Activated B cell treated with CpG ODN at 0.5 μM for 24 hours (primary cell): ENCODE measurements at regions of chr2 and their contacts with region 1.

Region 1: GRCh38 chr2:117994729-117995128 is 19.1 kb downstream of the CCDC93 start:
- DNase-seq: no peak
- ATAC-seq: no peak
- H3K4me3 Mint-ChIP-seq: no peak overlapping the region
- H3K27ac Mint-ChIP-seq: no peak overlapping the region
- H3K4me1 Mint-ChIP-seq: no peaks in the 10 kb centered on the region
- H3K27me3 Mint-ChIP-seq: no peaks in the 10 kb centered on the region
- CTCF ChIP-seq: no peak

Region 2: DNA sequence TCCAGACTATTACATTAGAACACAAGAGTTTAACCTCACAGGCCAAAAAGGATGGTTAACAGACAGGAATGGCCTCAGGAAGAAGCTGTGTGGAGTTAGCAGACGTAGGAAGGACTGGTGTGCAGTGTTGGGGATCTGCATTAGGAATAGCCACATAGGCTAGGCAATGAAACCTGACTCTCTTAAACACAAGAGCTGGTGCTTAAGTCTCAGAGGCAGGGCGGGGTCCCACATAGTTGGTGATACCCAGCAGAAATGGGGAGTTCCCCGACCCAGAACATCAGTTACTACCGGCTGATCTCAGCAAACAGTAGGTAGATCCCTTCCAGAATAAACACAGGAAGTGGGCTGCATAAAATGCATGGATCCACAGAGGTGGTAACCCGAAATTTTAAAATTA is 44.9 kb before region 1 on chr2:
- CTCF ChIA-PET with region 1: no interaction called
- POLR2A ChIA-PET with region 1: no interaction called
- intact Hi-C with region 1: loop called (anchors 5 kb)
- DNase-seq: no peak
- ATAC-seq: no peak
- H3K4me3 Mint-ChIP-seq: no peak overlapping the region
- H3K27ac Mint-ChIP-seq: no peak overlapping the region
- H3K4me1 Mint-ChIP-seq: no peaks in the 10 kb centered on the region
- H3K27me3 Mint-ChIP-seq: no peaks in the 10 kb centered on the region
- CTCF ChIP-seq: no peak